ENCODE measurements at regions of chr12 and their contacts with region 1.

Region 1: DNA sequence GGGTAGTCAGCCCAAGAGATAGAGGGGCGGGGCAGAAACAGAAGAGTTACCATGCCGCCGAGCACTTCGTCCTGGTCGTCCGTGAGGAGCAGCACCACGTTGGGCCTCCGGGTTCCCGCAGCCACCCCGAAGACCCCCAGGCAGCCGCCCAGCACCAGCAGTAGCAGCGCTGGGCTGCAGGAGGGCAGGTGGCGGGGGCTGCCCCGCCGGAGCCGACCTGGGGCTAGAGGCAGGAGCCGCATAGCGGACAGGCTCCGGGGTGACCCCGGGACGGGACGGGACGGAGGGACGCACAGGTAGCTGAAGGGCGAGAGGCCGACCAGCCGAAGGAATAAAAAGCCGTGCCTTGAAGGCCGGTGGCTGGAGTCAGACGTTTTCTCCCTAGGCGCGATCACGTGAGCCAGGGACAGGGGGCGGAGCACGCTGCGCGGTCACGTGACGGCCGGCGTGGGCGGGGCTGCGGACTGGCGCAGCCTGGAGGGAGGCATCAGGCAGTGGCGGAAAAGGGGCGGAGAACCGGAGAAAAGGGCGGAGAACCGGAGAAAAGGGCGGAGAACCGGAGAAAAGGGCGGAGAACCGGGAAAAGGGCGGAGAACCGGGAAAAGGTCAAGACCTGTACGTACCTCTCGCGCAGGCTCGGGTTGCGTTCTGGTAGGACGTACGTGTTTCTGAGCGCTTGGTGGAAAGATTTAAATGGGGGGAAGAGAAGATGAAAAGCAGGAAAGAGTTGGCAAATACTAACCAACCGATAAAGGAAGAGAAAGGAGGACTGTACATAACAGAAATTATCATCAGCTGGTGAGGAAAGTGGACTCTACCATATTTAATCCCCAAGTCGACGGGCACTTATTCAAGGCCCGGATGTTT is at the start of gene GNS:
- DNase-seq: peak; percentile 89 to 93 (median 92)
- H3K4me3 ChIP-seq: peak within 1 kb of the TSS; percentile 94 to 99 (median 97)
- H3K4me3 Mint-ChIP-seq: peak within 1 kb of the TSS; percentile 92 to 96
- H3K27ac ChIP-seq: peak within 1 kb of the TSS; percentile 88 to 90
- H3K27ac Mint-ChIP-seq: peak within 1 kb of the TSS; percentile 90 to 95 (median 94)
- H3K4me1 ChIP-seq: peaks cover 62 to 71% of the 10 kb centered on the region in 2 donors
- H3K4me1 Mint-ChIP-seq: peaks cover 65% of the 10 kb centered on the region
- H3K27me3 ChIP-seq: no peaks in the 10 kb centered on the region
- H3K27me3 Mint-ChIP-seq: no peaks in the 10 kb centered on the region
- CTCF ChIP-seq: no peak
- polyA plus RNA-seq, gene GNS: 103 to 274 (median 203) TPM

Region 2: DNA sequence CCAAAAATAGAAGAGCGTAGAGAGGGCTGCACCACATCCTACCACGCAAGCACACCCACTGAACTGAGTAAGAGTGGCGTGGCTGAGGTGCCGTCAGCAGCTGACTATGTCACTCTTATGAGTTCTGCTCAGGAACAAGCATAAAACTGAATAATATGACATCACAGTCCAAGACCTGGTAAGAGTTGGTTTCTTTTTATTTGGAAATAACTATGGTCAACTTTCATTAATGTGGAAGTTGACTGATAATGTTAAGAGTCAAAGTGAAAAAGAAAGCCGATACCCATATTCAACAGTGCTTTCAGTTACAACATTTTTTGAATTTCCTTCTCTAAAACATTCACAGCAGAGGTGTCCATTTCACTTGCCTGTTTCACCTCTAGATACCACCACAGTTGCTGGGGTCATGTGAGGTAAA is 44.7 kb before region 1 on chr12:
- intact Hi-C with region 1: loop called (anchors 5 kb)
- DNase-seq: peak; percentile 80 to 90 (median 83)
- H3K4me3 ChIP-seq: peak overlapping the region in 1 of 3 experiments; percentile 33
- H3K4me3 Mint-ChIP-seq: peak overlapping the region in 1 of 2 donors; percentile 35
- H3K27ac ChIP-seq: peak overlapping the region; percentile 72 to 88
- H3K27ac Mint-ChIP-seq: peak overlapping the region; percentile 85 to 95 (median 91)
- H3K4me1 ChIP-seq: peaks cover 44 to 47% of the 10 kb centered on the region in 2 donors
- H3K4me1 Mint-ChIP-seq: peaks cover 46% of the 10 kb centered on the region
- H3K27me3 ChIP-seq: no peaks in the 10 kb centered on the region
- H3K27me3 Mint-ChIP-seq: no peaks in the 10 kb centered on the region
- CTCF ChIP-seq: no peak